ENCODE measurements at regions of chr4 and their contacts with region 1.

Region 1: GRCh38 chr4:38034986-38035882 is 75.0 kb downstream of the PTTG2 start:
- DNase-seq: no peak
- H3K4me3 Mint-ChIP-seq: no peak overlapping the region
- H3K27ac Mint-ChIP-seq: no peak overlapping the region
- H3K4me1 Mint-ChIP-seq: no peaks in the 10 kb centered on the region
- H3K27me3 Mint-ChIP-seq: no peaks in the 10 kb centered on the region

Region 2: DNA sequence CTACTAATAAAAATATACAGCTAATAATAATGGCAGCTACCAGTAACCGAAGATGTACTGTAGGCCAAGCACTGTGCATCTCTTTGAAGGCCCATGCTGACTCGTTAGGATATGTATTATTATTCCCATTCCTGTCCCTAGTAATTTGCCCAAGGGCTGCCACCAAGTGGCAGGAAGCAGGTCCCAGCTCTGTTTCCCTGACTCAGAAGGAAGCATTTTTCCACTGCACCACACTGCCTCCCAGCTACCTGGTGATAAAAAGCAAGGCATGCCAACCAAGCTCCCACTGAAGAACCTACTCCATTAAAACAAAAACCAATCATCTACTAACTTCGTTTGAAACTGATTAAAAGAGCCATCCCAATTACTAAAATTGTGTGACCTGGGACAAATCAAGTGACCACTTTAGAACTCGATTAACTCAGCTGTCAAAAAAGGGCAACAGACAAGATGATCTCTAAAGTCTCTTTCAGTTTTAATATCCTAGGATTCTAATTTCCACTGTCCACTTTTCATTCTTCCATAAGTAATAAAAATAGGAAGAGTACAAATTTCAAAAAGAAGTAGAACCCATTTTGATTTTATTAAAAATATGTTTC is 233.1 kb before region 1 on chr4:
- intact Hi-C with region 1: loop called (anchors 1 kb)
- DNase-seq: no peak
- H3K4me3 Mint-ChIP-seq: no peak overlapping the region
- H3K27ac Mint-ChIP-seq: no peak overlapping the region
- H3K4me1 Mint-ChIP-seq: no peaks in the 10 kb centered on the region
- H3K27me3 Mint-ChIP-seq: peaks cover 14% of the 10 kb centered on the region

Region 3: GRCh38 chr4:38768968-38769394 is 733.7 kb after region 1 on chr4:
- intact Hi-C with region 1: no loop called
- DNase-seq: no peak
- H3K4me3 Mint-ChIP-seq: no peak overlapping the region
- H3K27ac Mint-ChIP-seq: no peak overlapping the region
- H3K4me1 Mint-ChIP-seq: no peaks in the 10 kb centered on the region
- H3K27me3 Mint-ChIP-seq: peaks cover 26% of the 10 kb centered on the region

Measured in activated T-helper 2 cell treated with anti-CD3 and anti-CD28 coated beads, Interferon-gamma antibody, Interleukin-2, Interleukin-4, amounts not matched to agents 10 μg/mL and 5 μg/mL and 100 μg/mL, durations not matched to agents 14 hours and 24 hours and 36 hours (primary cell).